Psoas muscle (tissue), 8 donors: ENCODE measurements at regions of chr11 and their contacts with region 1.

Region 1: DNA sequence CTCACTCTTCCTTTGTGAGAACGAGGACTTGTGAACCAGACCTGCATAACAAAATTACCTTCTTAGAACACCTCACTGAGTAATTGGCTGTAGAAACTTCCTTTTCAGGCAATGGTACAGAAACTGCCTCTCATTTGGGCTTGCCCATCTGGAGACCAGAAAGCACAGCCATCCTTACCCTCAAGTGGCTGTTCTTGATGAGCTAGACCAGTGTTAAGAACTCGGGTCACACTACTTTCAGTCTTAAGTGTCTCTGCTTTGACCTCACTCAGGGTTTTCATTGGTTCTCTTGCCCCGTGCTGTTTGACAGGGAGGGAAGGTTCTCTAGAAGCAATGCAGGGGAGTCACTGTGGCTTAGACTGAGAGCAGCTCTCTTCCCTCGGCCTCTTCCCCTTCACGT is 29.3 kb downstream of the NAT10 start:
- DNase-seq: no peak
- ATAC-seq: no peak
- H3K4me3 ChIP-seq: no peak overlapping the region
- H3K27ac ChIP-seq: no peak overlapping the region
- H3K4me1 ChIP-seq: no peaks in the 10 kb centered on the region
- H3K27me3 ChIP-seq: no peaks in the 10 kb centered on the region
- CTCF ChIP-seq: no peak

Region 2: GRCh38 chr11:34091825-34092224 is 42.9 kb before region 1 on chr11:
- intact Hi-C with region 1: loop called (anchors 5 kb)
- DNase-seq: no peak
- ATAC-seq: no peak
- H3K4me3 ChIP-seq: no peak overlapping the region
- H3K27ac ChIP-seq: no peak overlapping the region
- H3K4me1 ChIP-seq: no peaks in the 10 kb centered on the region
- H3K27me3 ChIP-seq: no peaks in the 10 kb centered on the region
- CTCF ChIP-seq: no peak